ENCODE measurements at regions of chr16 and their contacts with region 1.

Region 1: DNA sequence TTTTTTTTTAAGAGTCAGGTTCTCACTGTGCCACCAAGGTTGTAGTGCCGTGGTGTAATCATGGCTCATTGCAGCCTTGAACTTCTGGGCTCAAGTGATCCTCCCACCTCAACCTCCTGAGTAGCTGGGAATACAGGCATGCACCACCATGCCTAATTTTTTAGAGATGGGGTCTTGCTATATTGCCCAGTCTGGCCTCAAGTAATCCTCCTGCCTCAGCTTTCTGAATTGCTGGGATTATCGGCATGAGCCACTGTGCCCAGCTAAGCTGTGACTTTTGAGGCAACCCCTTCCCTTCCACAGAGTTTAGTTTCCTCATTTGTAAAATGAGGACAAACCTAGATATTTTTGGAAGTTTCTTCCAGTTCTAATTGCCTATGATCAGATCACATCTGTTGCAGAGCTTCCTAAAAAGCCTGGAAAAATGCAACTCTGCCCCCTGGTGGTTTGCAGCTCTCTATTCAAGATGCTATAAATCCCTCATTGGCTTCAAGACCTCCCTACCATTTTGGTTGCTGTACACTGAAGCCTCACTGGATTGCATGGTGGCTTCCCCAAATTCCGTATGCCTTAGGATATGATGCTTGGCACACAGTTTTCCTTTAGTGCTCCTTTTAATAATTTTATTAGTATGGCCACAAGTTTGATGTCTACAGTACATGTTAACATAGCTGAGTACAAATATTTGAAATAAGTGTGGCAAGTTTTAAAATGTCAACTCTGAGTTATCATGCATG is 19.3 kb downstream of the GDE1 start:
- DNase-seq: peak; percentile 72 to 89 (median 80)
- H3K4me3 ChIP-seq: no peak overlapping the region
- H3K27ac ChIP-seq: no peak overlapping the region
- H3K4me1 ChIP-seq: peaks cover 0 to 4% of the 10 kb centered on the region in 2 donors
- H3K27me3 ChIP-seq: no peaks in the 10 kb centered on the region
- CTCF ChIP-seq: peak; percentile 58 to 82 (median 70)
- POLR2A ChIP-seq: no peak

Region 2: GRCh38 chr16:19094541-19095365 is 407.8 kb before region 1 on chr16:
- intact Hi-C with region 1: loop called (anchors 10 kb)
- DNase-seq: no peak
- H3K4me3 ChIP-seq: no peak overlapping the region
- H3K27ac ChIP-seq: no peak overlapping the region
- H3K4me1 ChIP-seq: no peaks in the 10 kb centered on the region
- H3K27me3 ChIP-seq: no peaks in the 10 kb centered on the region
- CTCF ChIP-seq: peak in 1 of 6 experiments; percentile 17
- POLR2A ChIP-seq: no peak

Region 3: GRCh38 chr16:19389246-19389645 is 113.3 kb before region 1 on chr16:
- intact Hi-C with region 1: loop called (anchors 5 to 10 kb)
- DNase-seq: peak; percentile 26 to 66 (median 47)
- H3K4me3 ChIP-seq: no peak overlapping the region
- H3K27ac ChIP-seq: no peak overlapping the region
- H3K4me1 ChIP-seq: no peaks in the 10 kb centered on the region
- H3K27me3 ChIP-seq: peaks cover 6% of the 10 kb centered on the region
- CTCF ChIP-seq: peak; percentile 7 to 51 (median 41)
- POLR2A ChIP-seq: no peak

Measured in adrenal gland (tissue), 19 donors.